ENCODE measurements at regions of chr7 and their contacts with region 1.

Region 1: DNA sequence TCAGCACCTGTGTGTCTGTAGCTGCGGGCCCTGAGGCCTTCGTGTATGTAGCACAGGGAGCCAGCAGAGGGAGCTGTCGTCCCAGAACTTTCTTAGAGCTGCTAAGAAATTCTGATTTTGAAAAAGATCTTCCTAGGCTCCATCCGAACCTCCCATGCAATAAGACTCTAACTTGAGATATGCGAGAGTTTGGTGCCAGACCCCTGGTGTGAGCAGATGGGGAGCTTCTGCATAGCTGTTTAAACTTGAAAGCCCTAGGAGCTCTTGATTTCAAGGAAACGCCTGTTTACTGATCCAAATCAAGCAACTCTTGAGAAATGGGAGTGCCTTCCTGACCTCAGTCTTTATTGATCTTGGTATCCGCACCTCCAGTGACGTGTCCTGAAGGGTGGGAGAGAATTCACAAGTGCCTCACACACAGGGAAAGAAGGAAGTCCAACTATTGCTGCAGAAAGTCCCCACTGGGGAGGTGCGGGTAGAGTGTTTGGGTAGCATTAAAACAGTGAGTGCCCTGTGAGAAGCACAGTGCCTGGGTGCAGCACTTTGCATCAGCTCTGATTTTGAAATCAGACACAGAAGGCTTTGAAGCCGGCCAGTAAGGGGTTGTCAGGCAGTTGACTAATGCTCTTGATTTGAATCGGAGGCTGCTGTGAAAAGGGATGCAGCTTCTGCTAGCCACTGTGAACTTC is 66.4 kb upstream of the STRIP2 start:
- DNase-seq: peak; percentile 76 to 98
- H3K4me3 ChIP-seq: peak overlapping the region; percentile 76
- H3K27ac ChIP-seq: peak overlapping the region; percentile 97
- H3K4me1 ChIP-seq: peaks cover 36% of the 10 kb centered on the region
- H3K27me3 ChIP-seq: no peaks in the 10 kb centered on the region
- CTCF ChIP-seq: peak; percentile 94

Region 2: DNA sequence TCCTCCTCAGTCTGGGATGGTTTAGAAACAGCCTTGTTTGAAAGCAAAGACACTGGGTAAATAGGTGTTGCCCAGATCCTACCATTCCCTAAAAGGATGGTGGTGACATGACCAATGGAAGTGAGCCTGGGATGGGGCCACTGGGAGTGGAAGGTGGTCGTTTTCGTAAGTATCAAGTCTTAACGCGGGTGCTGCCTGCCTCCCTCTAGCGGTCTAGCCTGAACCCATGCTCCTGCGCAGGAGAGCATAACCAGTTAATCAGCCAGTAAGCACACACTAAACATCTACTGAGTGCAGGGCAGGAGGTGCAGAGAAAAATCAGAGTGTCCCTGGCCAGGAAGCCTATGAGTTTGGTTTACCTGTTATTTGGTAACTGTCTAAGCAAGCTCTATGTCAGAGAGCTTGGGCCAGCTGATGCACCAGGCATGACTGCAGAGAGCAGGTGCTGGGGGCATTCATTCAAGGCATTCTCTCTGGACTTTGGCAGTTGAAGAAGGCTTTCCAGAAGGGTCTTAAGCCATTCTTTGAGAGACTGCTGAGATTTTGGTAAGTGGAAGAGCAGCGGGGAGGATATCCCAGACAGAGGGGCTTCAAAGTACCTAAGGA is 694.8 kb before region 1 on chr7:
- CTCF ChIA-PET with region 1: no interaction called
- POLR2A ChIA-PET with region 1: no interaction called
- intact Hi-C with region 1: no loop called
- DNase-seq: no peak
- H3K4me3 ChIP-seq: no peak overlapping the region
- H3K27ac ChIP-seq: no peak overlapping the region
- H3K4me1 ChIP-seq: no peaks in the 10 kb centered on the region
- H3K27me3 ChIP-seq: no peaks in the 10 kb centered on the region
- CTCF ChIP-seq: no peak

Region 3: DNA sequence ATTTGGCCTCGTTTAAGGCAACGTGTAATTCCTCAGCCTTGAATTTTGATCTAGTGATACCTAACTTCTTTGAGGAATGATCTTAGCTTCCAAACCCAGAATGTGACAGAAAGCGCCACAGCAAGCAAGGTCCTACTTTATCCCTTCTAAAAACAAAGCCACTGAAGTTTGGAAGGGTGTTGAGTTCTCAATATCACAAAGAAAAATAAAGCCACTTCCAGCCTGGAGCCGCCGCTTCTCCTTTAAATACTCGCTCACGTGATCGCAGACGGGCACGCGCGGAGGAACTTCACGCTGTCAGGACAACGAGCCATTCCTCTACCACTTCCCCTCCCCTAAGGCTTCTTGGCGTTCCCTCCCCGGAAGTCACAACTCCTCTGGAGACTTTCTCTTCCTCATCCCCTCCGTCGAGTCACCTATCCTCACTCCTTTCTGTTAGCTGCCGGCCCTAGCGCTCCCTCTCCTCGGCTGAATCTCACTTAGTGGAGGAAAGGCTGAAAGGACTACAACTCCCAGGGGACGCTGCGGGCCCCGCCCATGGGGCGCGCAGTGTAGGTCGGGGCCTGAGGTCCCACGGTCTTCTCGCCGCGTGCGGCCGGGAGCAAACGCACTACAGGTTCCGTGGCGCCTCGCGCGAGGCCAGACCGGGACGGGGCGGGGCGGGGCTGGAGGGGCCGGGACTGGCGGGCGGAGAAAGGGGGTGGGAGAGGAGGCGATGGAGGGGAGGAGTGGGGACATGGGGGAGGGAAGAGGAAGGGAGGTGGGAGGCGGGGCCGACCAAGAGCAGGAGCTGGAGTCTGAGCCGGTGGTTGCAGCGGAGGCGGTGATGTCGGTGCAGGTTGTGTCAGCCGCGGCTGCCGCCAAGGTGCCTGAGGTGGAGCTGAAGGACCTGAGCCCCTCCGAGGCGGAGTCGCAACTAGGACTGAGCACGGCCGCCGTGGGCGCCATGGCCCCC is 143.3 kb before region 1 on chr7 and contains the start of gene AHCYL2:
- CTCF ChIA-PET with region 1: interaction called, 3 read pairs
- POLR2A ChIA-PET with region 1: no interaction called
- intact Hi-C with region 1: loop called (anchors 2 kb)
- DNase-seq: peak; percentile 95 to 98
- H3K4me3 ChIP-seq: peak within 1 kb of the TSS; percentile 75
- H3K27ac ChIP-seq: peak within 1 kb of the TSS; percentile 74
- H3K4me1 ChIP-seq: peaks cover 19% of the 10 kb centered on the region
- H3K27me3 ChIP-seq: no peaks in the 10 kb centered on the region
- CTCF ChIP-seq: no peak
- total RNA-seq, gene AHCYL2: 15.7 and 16.2 TPM in 2 replicates

Region 4: GRCh38 chr7:129351320-129351719 is 16.5 kb before region 1 on chr7:
- CTCF ChIA-PET with region 1: interaction called, 5 read pairs
- POLR2A ChIA-PET with region 1: interaction called, 14 read pairs
- intact Hi-C with region 1: no loop called
- DNase-seq: no peak
- H3K4me3 ChIP-seq: no peak overlapping the region
- H3K27ac ChIP-seq: no peak overlapping the region
- H3K4me1 ChIP-seq: no peaks in the 10 kb centered on the region
- H3K27me3 ChIP-seq: no peaks in the 10 kb centered on the region
- CTCF ChIP-seq: no peak

Region 5: DNA sequence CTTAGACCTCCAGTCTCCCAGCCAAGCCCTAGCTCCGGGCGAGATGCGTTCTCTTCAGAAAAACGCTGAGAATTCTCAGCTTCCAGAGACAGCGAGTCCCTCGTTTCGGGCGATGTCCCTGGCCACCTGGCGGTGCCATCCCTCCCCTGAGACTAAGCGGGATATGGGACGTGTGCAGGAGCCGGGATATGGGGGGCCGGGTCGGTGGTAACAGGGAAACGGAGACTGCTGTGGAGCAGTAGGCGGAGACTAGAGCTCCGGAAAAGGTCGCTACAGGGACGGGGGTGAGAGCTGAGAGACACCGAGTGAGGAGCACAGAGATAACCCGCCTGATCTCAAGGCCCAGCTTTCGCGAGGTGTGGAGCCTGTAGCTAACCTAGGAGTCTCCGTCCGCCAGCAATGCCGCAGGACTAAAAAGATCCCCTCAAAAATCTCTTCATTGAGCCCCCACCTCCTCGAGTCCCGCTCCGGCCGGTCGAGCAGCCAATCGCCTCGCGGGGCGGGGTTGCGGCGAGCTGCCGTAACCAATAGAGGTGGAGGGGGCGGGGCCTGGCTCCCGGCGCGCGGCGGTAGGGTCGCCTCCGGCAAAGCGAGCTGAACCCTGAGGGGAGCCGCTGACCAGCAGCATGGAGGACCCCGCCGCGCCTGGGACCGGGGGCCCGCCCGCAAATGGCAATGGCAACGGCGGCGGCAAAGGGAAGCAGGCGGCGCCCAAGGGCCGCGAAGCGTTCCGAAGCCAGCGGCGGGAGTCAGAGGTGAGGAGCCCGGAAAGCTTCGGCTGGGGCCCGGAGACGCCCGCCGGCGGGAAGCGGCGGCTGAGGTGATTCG is 66.2 kb after region 1 on chr7 and contains the start of gene STRIP2:
- CTCF ChIA-PET with region 1: interaction called, 13 read pairs
- POLR2A ChIA-PET with region 1: no interaction called
- intact Hi-C with region 1: loop called (anchors 1 kb)
- DNase-seq: peak; percentile 72 to 94
- H3K4me3 ChIP-seq: peak within 1 kb of the TSS; percentile 95
- H3K27ac ChIP-seq: peak within 1 kb of the TSS; percentile 45
- H3K4me1 ChIP-seq: peaks cover 44% of the 10 kb centered on the region
- H3K27me3 ChIP-seq: no peaks in the 10 kb centered on the region
- CTCF ChIP-seq: no peak
- total RNA-seq, gene STRIP2: 6.4 and 9.5 TPM in 2 replicates

Region 6: DNA sequence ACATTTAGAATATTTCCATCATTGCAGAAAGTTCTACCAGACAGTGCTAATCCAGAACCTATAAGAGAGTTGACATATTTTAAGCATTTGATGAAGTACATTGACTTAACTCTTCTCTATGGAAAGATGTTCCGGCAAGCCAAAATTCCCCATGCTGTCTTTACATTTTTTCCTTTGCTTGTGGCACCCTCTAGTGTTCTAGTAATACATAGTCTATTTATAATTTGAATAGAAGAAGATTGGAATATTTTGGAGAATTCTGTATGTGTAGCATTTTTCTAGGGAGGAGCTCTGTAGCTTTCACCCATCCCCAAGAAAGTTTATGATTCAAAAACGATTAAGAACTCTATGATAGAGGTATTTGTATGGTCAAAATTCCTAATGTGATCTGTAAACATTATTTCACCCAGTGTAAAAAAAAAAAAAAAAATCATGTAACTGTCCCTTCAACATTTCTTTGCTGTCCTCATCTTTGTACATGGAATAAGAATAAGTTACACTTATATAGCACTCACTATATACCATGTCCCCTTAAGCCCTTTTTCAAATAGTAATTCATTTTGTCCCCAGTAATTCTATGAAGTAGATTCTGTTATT is 276.9 kb after region 1 on chr7:
- CTCF ChIA-PET with region 1: interaction called, 4 read pairs
- POLR2A ChIA-PET with region 1: no interaction called
- intact Hi-C with region 1: loop called (anchors 1 kb)
- DNase-seq: peak in 1 of 2 experiments; percentile 49
- H3K4me3 ChIP-seq: no peak overlapping the region
- H3K27ac ChIP-seq: no peak overlapping the region
- H3K4me1 ChIP-seq: peaks cover 23% of the 10 kb centered on the region
- H3K27me3 ChIP-seq: no peaks in the 10 kb centered on the region
- CTCF ChIP-seq: peak; percentile 76

Measured in PC-9 (cell line).